ENCODE measurements at regions of chr3 and their contacts with region 1.

Region 1: DNA sequence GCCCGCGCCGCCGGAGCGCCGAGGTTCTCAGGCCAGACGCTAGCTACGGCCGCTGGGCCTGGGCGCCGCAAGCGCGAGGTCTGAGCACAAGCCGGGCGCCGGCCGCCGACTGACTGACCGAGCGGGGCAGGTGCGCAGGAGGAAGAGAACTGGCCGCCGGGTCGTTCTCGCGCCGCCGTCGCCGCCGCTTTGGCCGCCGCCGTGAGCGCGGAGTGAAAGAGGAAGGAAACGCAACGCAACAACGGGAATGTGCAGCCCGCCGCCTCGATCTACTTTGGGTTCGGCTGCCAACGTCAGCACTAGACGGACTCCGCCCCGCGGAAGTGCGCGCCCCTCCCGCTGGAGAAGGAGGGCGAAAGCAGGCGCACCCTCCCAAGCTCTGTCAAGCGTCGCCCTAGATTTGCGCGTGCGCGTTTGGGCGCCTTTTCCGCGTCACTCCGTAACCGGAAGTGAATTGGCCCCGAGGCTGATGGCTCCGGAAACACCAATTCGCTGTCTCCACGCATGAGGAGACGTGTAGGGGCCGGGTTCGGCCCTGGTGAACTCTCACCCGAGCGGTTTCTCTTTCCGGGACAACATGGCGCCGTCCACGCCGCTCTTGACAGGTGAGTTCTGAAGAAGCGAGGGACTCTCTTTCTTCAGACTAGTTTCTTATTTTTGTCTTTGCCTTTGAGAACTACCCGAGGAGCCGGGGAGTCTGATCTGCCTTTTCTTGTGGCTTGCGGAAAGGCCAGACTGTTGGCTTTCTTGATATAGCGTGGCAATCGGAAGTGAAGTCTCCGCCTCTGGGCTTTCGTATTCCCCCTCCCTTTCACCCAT is at the starts of genes EIF2A and SERP1:
- DNase-seq: peak; percentile 98
- ATAC-seq: peak; percentile 92
- H3K4me3 ChIP-seq: peak within 1 kb of the TSS; percentile 97
- H3K27ac ChIP-seq: peak within 1 kb of the TSS; percentile 96
- H3K4me1 ChIP-seq: peaks cover 3% of the 10 kb centered on the region; the same call in 1 of the 2 replicates
- H3K27me3 ChIP-seq: no peaks in the 10 kb centered on the region
- CTCF ChIP-seq: no peak
- EP300 ChIP-seq: peak in 1 of 2 experiments; percentile 44; a peak in 1 of 4 replicates
- POLR2A ChIP-seq: peak; percentile 97
- RAD21 ChIP-seq: no peak
- polyA plus RNA-seq, gene EIF2A: 126 to 130 TPM
- polyA plus RNA-seq, gene SERP1: 31.1 to 46.7 TPM

Region 2: DNA sequence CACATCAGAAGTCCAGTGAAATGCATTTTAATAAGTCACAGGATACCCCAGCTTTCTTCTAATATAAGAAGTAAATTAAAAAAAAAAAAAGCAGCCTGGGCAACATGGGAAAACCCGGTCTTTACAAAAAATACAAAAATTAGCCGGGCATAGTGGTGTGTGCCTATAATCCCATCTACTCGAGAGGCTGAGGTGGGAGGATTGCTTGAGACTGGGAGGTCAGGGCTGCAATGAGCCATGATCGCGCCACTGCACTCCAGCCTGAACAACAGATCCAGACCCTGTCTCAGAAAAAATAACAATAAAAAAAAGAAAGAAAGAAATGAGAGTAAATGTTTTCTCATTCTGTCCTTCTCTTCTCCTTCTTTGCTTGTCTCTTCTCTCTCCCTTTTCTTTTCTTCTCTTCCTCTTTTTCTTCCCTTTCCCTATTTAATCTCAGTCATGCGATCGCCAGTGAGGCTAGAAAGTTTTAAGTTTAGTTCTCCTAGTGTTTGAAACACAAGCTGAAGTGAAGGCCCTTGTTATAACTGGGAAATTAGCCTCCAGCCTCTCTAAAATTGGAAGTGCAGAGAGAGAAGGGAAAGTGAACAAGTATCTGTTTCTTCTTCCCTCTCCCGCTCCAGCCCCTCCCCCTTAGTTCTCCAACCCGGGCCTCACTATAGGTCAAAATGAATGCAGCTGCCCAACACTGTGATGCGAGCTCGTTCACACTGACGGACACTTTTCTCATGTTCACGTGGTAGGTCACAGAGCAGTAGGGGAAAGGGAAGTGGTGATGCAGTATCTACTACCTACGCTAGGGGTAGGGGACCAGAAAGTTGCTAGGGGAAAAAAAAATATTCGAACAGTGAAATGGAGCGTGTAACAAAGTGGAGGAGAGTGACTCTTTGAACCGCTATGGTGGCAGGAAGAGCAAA is 161.9 kb before region 1 on chr3:
- CTCF ChIA-PET with region 1: interaction called, 3 read pairs
- POLR2A ChIA-PET with region 1: no interaction called
- RAD21 ChIA-PET with region 1: no interaction called
- SMC1A ChIA-PET with region 1: no interaction called
- in situ Hi-C with region 1: no loop called
- intact Hi-C with region 1: loop called (anchors 5 kb)
- DNase-seq: peak; percentile 97
- ATAC-seq: peak; percentile 92
- H3K4me3 ChIP-seq: peak overlapping the region; percentile 58
- H3K27ac ChIP-seq: peak overlapping the region; percentile 99
- H3K4me1 ChIP-seq: peaks cover 23% of the 10 kb centered on the region
- H3K27me3 ChIP-seq: no peaks in the 10 kb centered on the region
- CTCF ChIP-seq: peak; percentile 35 to 61 (median 60)
- EP300 ChIP-seq: no peak
- POLR2A ChIP-seq: peak; percentile 59
- RAD21 ChIP-seq: peak; percentile 47; the same call in 1 of the 2 replicates

Region 3: GRCh38 chr3:150594150-150594549 is 47.7 kb after region 1 on chr3:
- CTCF ChIA-PET with region 1: interaction called, 3 read pairs
- POLR2A ChIA-PET with region 1: interaction called, 33 read pairs
- RAD21 ChIA-PET with region 1: interaction called, 25 read pairs
- SMC1A ChIA-PET with region 1: interaction called, 11 read pairs
- in situ Hi-C with region 1: no loop called
- intact Hi-C with region 1: loop called (anchors 2 kb)
- DNase-seq: no peak
- ATAC-seq: no peak
- H3K4me3 ChIP-seq: no peak overlapping the region
- H3K27ac ChIP-seq: no peak overlapping the region
- H3K4me1 ChIP-seq: peaks cover 10% of the 10 kb centered on the region
- H3K27me3 ChIP-seq: no peaks in the 10 kb centered on the region
- CTCF ChIP-seq: no peak
- EP300 ChIP-seq: no peak
- POLR2A ChIP-seq: no peak
- RAD21 ChIP-seq: no peak

Region 4: GRCh38 chr3:150603153-150603979 is 56.9 kb after region 1 on chr3 and contains the start of gene SELENOT:
- CTCF ChIA-PET with region 1: interaction called, 6 read pairs
- POLR2A ChIA-PET with region 1: interaction called, 33 read pairs
- RAD21 ChIA-PET with region 1: interaction called, 25 read pairs
- SMC1A ChIA-PET with region 1: interaction called, 11 read pairs
- in situ Hi-C with region 1: no loop called
- intact Hi-C with region 1: loop called (anchors 1 kb)
- DNase-seq: peak; percentile 94
- ATAC-seq: peak; percentile 70
- H3K4me3 ChIP-seq: peak within 1 kb of the TSS; percentile 92
- H3K27ac ChIP-seq: peak within 1 kb of the TSS; percentile 92
- H3K4me1 ChIP-seq: peaks cover 16% of the 10 kb centered on the region
- H3K27me3 ChIP-seq: no peaks in the 10 kb centered on the region
- CTCF ChIP-seq: peak; percentile 2 to 22 (median 10); a peak in 1 of 6 replicates
- EP300 ChIP-seq: peak in 1 of 2 experiments; percentile 32; a peak in 1 of 4 replicates
- POLR2A ChIP-seq: peak; percentile 100
- RAD21 ChIP-seq: 0 out of 2 replicates have a peak, but pooled peaks have one; percentile 1
- polyA plus RNA-seq, gene SELENOT: 323 to 593 TPM

Region 5: DNA sequence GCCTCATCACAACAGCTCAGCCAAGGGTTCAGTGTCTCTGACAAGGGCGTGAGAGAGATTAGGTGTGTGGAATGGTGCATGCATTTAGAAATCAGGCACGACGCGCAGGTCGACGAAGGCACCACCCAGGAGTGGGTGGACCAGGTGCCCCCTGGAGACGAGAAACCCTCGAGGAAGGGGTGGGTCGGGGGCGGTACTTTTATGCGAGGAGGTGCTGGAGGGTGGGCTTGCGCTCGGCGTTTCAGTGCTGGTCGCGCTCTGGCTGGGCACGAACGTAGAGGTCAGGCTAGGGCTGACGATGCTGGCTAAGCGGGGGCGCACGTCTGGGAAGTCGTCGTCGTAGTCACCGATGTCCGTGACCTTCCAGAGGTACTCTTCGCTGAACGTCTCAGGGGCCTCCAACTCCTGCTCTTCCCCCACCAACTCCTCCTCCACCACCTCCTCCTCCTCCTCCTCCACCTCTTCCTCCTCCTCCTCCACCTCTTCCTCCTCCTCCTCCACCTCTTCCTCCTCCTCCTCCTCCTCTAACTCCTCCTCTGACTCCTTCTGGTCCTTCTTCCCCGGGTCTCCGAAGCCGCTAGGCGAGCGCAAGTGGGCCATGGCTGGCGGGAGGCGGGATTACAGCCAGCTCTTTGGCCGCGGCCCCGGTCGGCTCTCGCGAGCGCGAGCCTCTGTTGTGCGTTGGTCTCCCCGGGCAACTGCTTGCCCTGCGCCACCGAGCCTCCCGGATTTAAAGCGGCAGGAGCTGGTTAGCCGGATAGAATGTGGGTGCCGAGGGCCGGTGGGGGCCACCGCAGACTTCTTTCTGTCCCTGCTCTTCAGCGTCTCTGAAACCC is 157.1 kb after region 1 on chr3 and contains the start of gene ERICH6:
- CTCF ChIA-PET with region 1: no interaction called
- POLR2A ChIA-PET with region 1: interaction called, 4 read pairs
- RAD21 ChIA-PET with region 1: interaction called, 3 read pairs
- SMC1A ChIA-PET with region 1: interaction called, 6 read pairs
- in situ Hi-C with region 1: no loop called
- intact Hi-C with region 1: loop called (anchors 1 kb)
- DNase-seq: peak; percentile 55
- ATAC-seq: peak; percentile 100
- H3K4me3 ChIP-seq: peak within 1 kb of the TSS; percentile 62
- H3K27ac ChIP-seq: peak within 1 kb of the TSS; percentile 63
- H3K4me1 ChIP-seq: peaks cover 5% of the 10 kb centered on the region
- H3K27me3 ChIP-seq: no peaks in the 10 kb centered on the region
- CTCF ChIP-seq: peak; percentile 5 to 23 (median 9); a peak in 2 of 6 replicates
- EP300 ChIP-seq: peak in 1 of 2 experiments; percentile 46; a peak in 1 of 4 replicates
- POLR2A ChIP-seq: peak; percentile 80
- RAD21 ChIP-seq: no peak
- polyA plus RNA-seq, gene ERICH6: 0.40 TPM in 1 of 2 experiments, not detected in the other

Region 6: GRCh38 chr3:151146071-151146730 is 599.8 kb after region 1 on chr3:
- CTCF ChIA-PET with region 1: no interaction called
- POLR2A ChIA-PET with region 1: no interaction called
- RAD21 ChIA-PET with region 1: no interaction called
- SMC1A ChIA-PET with region 1: interaction called, 3 read pairs
- in situ Hi-C with region 1: loop called (anchors 25 kb)
- intact Hi-C with region 1: no loop called
- DNase-seq: peak; percentile 25
- ATAC-seq: peak; percentile 94
- H3K4me3 ChIP-seq: no peak overlapping the region
- H3K27ac ChIP-seq: no peak overlapping the region
- H3K4me1 ChIP-seq: no peaks in the 10 kb centered on the region
- H3K27me3 ChIP-seq: peaks cover 2 to 3% of the 10 kb centered on the region in 2 experiments
- CTCF ChIP-seq: peak; percentile 83 to 90 (median 83)
- EP300 ChIP-seq: no peak
- POLR2A ChIP-seq: no peak
- RAD21 ChIP-seq: peak; percentile 74

Region 7: DNA sequence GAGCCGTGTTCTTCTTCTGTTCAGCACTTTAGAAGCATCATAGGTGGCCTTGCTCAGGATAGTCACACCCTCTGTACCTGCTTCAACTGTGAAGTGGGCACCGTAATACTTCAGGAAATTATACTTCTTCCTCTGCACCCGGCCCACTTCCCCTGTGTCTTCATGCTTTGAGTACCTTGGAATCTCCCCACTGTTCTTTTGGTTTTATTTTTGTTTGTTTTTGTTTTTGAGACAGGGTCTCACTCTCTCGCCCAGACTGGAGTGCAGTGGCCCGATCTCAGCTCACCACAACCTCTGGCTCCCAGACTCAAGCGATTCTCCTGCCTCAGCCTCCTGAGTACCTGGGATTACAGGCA is 730.2 kb after region 1 on chr3:
- CTCF ChIA-PET with region 1: no interaction called
- POLR2A ChIA-PET with region 1: no interaction called
- RAD21 ChIA-PET with region 1: no interaction called
- SMC1A ChIA-PET with region 1: no interaction called
- in situ Hi-C with region 1: loop called (anchors 10 kb)
- intact Hi-C with region 1: no loop called
- DNase-seq: no peak
- ATAC-seq: peak; percentile 87
- H3K4me3 ChIP-seq: no peak overlapping the region; the same call in 1 of the 2 replicates
- H3K27ac ChIP-seq: no peak overlapping the region
- H3K4me1 ChIP-seq: peaks cover 36% of the 10 kb centered on the region
- H3K27me3 ChIP-seq: no peaks in the 10 kb centered on the region
- CTCF ChIP-seq: no peak
- EP300 ChIP-seq: no peak
- POLR2A ChIP-seq: no peak
- RAD21 ChIP-seq: no peak